HCT116 (cell line): ENCODE measurements at regions of chr12 and their contacts with region 1.

Region 1: DNA sequence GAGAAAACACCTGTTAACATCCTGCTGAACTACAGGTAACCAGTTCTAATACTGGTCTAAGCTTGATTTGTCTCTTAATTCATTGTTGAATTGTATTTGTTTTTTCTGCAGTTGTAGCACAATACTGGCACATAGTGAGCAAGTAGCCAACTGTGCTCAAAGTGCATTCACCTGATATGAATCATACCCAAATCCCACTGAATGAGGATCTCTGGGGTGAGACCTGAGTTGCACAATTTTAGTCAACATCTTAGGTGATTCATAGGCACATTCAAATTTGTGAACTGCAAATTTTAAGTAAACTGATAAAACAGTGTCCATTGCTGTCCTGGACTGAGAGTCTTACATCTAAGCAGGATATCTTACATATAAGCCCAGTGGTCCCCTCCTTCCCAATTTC is 12.8 kb downstream of the KCNC2 start:
- DNase-seq: no peak
- ATAC-seq: no peak
- H3K4me3 ChIP-seq: no peak overlapping the region
- H3K27ac ChIP-seq: no peak overlapping the region
- H3K4me1 ChIP-seq: peaks cover 0 to 8% of the 10 kb centered on the region in 2 experiments; a peak in 2 of 4 replicates
- H3K27me3 ChIP-seq: no peaks in the 10 kb centered on the region
- CTCF ChIP-seq: no peak
- POLR2A ChIP-seq: no peak
- RAD21 ChIP-seq: 0 out of 2 replicates have a peak, but pooled peaks have one; percentile 11

Region 2: GRCh38 chr12:76356094-76356493 is 1159.2 kb after region 1 on chr12:
- CTCF ChIA-PET with region 1: no interaction called
- POLR2A ChIA-PET with region 1: no interaction called
- RAD21 ChIA-PET with region 1: no interaction called
- intact Hi-C with region 1: loop called (anchors 5 kb)
- DNase-seq: no peak
- ATAC-seq: no peak
- H3K4me3 ChIP-seq: no peak overlapping the region
- H3K27ac ChIP-seq: no peak overlapping the region
- H3K4me1 ChIP-seq: no peaks in the 10 kb centered on the region
- H3K27me3 ChIP-seq: no peaks in the 10 kb centered on the region
- CTCF ChIP-seq: no peak
- POLR2A ChIP-seq: no peak
- RAD21 ChIP-seq: no peak